ENCODE measurements at regions of chr9 and their contacts with region 1.

Region 1: DNA sequence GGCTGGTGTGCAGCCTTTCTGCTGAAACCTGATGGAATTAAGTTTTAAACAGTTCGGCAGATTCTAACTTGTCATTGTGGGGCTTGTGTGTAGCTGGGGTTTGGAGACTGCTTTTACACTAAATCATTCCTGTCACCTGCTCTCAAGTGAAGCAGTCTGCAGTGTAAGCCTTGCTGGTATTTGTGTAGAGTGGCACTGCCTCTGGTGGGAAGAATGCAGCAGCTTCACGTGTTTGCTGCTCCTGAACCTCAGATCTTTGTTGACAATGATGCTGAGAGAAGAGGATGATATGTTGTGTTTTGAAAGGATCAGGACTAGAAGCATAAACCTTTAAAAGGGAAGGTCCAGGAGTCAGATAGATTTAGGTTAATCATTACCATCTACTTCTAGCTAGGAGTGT is 88.1 kb downstream of the KDM4C start:
- DNase-seq: no peak
- CTCF ChIP-seq: no peak

Region 2: DNA sequence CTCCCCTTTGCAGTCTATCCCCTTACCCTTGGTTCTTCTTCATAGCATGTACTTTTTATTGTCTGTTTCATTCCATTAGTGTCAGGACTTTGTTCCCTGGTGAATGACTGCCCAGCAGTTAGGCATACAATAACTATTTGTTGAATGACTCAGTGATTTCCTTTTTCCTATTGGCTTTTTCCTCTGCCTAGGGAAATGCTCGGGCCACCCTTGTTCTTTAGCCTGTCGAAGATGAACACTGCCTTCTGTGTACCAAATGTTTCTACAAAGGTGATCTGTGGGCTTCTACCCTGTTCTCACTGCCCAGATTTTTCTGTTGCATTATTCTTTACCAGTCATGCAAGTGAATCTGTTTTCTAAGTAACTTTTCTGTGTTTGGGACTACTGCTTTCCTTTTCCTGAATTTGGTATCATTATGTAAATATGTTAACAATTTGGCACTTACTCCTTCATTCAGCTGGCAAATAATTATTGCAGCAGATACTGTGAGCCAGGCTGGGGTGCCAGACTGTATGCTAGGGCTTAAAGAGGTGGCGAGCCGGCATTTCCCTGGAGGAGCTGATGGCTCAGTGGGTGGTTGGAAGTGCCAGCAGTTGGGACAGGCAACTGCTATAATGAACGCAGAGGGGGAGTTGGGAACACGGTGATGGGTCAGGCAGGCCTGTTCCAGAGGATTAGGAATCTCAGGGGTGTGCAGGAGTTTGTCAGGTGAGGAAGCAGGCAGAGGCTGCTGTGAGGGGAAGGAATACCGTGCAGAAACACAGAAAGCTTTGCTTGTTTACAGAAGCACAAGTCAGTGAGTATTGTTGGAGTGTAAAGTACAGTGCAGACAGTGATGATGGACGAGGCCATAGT is 57.5 kb before region 1 on chr9:
- CTCF ChIA-PET with region 1: no interaction called
- POLR2A ChIA-PET with region 1: no interaction called
- DNase-seq: no peak
- CTCF ChIP-seq: no peak

Region 3: DNA sequence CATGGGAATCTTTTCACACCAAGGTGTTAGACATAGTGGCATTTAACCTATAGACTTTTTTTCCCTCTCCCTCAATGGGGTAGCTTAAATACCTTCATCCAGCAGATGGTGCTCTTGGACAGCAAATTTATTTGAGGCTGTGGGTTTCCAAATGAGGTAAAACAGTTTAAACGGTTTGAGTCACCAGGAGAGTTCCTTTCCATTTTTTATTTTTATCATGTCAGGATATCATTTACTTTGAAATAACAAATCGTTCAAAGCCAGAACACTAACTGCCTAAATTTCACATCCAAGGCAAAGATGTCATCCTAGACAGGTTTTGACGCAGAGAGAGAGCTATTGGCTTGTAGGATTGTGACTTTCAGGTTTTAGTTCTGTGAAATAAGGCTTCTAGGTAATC is 18.4 kb before region 1 on chr9:
- CTCF ChIA-PET with region 1: interaction called, 35 read pairs
- POLR2A ChIA-PET with region 1: no interaction called
- DNase-seq: peak; percentile 53
- CTCF ChIP-seq: peak; percentile 54